ENCODE measurements at regions of chrX and their contacts with region 1.

Region 1: DNA sequence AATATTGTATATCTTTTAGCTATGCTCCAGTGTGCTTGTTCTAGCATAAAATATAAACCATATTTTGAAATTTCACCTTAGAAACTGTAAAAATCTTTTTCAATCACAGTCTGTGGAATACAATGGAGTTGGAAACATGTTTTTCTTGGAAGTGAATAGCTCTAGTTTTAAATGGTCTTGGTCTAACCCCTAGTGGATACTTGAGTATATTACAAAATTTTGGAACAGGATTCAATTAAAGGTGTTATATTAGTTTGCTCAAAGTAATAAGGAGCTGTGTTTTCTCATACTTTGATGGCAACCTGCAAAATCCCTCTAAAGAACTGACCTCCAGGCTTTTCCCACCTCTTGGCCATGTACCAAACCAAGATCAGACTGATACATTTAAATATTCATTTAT is 48.2 kb downstream of the STK26 start:
- DNase-seq: no peak
- H3K4me3 Mint-ChIP-seq: no peak overlapping the region
- H3K27ac Mint-ChIP-seq: no peak overlapping the region
- H3K4me1 Mint-ChIP-seq: peaks cover 9% of the 10 kb centered on the region
- H3K27me3 Mint-ChIP-seq: no peaks in the 10 kb centered on the region
- CTCF ChIP-seq: no peak

Region 2: DNA sequence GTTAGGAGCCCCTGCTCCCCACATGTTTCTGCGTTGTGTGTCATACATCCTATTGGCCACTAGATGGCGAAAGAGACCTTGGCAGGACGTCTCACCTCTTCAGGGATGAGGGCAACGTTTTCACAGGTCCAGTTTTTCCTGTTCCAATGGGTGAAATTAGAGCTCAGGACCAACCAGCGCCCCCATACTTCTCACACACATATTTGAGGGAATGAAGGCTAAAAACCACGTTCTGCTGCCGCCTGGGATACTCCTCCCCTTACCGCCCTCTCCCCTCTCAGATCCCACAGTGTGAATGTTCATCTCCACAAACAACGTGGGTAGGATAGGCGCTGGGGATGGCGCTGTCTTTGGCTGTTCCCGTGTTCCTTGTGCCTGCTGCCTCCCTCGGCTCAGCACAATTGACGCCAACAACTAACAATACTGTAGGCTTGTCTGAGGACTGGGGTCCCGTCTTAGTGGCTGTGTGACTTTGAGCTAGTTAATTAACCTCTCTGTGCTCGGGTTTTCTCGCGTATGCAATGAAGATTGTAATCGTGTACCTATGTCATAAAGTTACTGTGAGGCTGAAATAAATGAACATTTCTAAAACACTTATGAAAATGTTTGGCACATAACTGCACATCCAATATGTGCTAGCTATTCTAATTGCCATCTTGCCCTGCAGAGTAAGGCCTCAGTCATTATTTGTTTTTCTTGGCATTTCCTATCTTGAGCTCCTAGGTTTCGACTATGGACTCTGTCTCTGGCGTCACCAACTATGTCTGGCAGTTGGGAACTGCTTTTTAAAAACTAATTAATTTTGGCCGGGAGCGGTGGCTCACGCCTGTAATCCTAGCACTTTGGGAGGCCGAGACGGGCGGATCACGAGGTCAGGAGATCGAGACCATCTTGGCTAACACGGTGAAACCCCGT is 229.5 kb before region 1 on chrX:
- CTCF ChIA-PET with region 1: interaction called, 12 read pairs
- intact Hi-C with region 1: loop called (anchors 1 kb)
- DNase-seq: peak; percentile 51
- H3K4me3 Mint-ChIP-seq: peak overlapping the region; percentile 21
- H3K27ac Mint-ChIP-seq: no peak overlapping the region
- H3K4me1 Mint-ChIP-seq: no peaks in the 10 kb centered on the region
- H3K27me3 Mint-ChIP-seq: no peaks in the 10 kb centered on the region
- CTCF ChIP-seq: peak; percentile 66

Region 3: GRCh38 chrX:132144061-132144460 is 72.8 kb after region 1 on chrX:
- CTCF ChIA-PET with region 1: no interaction called
- intact Hi-C with region 1: no loop called
- DNase-seq: no peak
- H3K4me3 Mint-ChIP-seq: no peak overlapping the region
- H3K27ac Mint-ChIP-seq: no peak overlapping the region
- H3K4me1 Mint-ChIP-seq: no peaks in the 10 kb centered on the region
- H3K27me3 Mint-ChIP-seq: peaks cover 13% of the 10 kb centered on the region
- CTCF ChIP-seq: no peak

Measured in Calu3 (cell line).